ENCODE measurements at regions of chr18 and their contacts with region 1.

Region 1: GRCh38 chr18:76398896-76399612 is 96.0 kb downstream of the ZNF516 start:
- DNase-seq: peak; percentile 93
- ATAC-seq: peak; percentile 92

Region 2: DNA sequence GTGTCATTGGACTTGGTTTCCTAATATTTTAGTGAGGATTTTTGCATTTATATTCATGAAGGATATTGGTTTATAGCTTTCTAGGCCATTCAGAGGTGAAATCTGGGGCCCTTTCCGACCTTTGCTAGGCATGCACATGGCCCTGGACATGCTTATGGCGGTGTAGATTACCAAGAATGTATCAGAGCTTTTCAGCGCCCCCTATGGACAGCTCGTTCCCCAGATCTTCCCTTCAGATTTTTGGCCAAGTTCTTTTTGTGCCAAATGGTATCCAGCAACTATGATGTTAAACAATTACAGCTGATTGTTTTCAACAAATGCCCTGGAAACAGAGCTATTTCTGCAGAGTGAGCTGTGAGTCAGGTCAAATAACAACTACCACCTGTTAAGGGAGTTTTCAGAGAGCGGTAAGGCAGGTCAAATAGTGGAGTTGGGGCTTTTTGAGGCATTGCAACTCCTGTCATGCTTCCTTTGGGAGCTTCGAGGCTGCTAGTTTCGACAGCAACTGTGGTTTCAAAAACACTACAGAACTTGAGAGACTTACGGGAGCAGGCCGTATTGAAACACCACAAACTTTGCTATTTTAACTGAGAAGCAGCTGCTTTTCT is 92.3 kb before region 1 on chr18:
- intact Hi-C with region 1: no loop called
- DNase-seq: no peak
- ATAC-seq: no peak

Region 3: DNA sequence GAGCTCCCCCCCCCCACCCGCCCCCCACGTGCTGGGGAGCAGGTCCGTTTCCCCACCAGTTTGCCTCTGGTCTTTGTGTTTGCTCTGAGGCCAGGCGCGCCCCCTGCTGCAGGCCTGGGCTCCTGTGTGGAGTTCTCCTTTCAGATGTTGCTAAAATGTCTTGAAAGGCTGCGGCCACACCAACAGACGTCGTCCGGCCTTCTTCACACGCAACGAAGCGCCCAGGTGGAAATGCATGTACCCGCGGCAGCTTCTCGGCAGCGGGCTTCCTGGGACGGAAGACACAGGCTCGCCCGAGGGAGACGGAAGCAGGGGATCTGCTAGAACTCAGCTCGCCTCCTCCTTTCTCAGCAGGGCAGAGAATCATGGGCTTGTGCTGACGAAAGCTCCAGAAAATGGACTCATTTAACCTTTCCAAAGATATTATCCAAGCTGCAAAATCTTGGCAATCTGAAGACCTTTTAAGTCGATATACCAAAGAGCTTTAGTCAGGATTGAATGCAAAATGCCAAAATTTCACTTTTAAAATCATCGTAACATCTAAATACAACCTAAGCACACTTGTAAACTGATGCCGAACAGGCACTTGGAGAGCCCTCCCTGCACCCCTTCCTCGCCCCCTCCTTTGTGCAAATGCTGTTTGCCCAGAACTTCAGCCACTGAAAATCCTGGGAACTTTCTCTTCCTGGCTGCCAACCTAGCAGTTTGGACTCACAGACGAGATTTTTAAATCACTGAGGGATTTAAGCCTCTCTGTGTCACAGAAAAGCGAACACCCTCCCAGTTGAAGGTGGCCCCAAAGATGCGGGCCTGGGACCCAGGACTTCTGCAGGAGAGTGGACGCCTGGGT is 221.5 kb after region 1 on chr18:
- intact Hi-C with region 1: loop called (anchors 2 kb)
- DNase-seq: peak; percentile 92
- ATAC-seq: peak; percentile 81

Region 4: GRCh38 chr18:76686737-76687262 is 287.7 kb after region 1 on chr18:
- intact Hi-C with region 1: loop called (anchors 2 kb)
- DNase-seq: no peak
- ATAC-seq: peak; percentile 83

Region 5: GRCh38 chr18:76709659-76710645 is 310.9 kb after region 1 on chr18:
- intact Hi-C with region 1: loop called (anchors 1 kb)
- DNase-seq: peak; percentile 89
- ATAC-seq: peak; percentile 80

Measured in Right ventricle myocardium inferior (tissue), 1 donor.